ENCODE measurements at regions of chr6 and their contacts with region 1.

Region 1: DNA sequence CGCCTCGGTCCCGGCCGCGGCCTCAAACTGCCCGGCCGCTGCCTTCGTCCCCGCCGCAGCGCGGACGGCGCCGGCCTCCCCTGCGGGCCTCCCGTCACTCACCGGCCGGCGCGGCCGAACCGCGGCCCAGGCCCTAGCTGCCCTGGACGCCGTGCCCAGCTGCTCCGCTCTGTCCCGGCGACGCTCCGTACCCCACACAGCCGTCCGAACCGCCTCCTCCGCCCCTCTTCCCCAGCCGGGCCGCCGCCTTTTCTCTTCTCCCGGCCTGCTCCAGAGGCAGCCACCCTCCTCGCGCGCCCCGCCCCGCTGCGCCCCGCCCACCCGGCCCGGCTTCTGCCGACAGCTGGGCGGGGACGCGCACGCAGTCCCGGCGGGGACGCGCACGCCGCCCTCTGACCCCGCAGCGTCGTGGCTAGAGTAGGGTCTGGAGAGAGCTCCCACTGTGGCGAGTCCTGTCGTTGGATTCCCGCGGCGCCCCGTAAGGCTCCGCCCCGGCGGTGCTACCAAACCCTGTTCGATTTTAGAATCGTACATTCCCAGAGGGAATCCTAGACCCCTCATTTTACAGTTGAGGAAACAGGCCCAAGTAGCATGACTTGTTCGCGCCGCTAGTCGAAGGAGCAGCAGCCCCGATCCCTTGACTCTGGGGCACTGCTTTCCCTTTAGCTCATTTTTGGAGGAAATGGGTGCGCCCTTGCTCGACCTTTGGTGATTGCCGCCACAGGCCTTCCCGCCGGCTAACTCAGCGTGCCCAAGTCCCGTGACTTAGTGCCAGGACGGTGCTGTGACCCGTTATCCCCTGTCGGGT is at the start of gene FBXO30:
- DNase-seq: peak; percentile 94 to 96 (median 95)
- ATAC-seq: peak; percentile 84
- H3K4me3 ChIP-seq: peak within 1 kb of the TSS; percentile 66
- H3K27ac ChIP-seq: peak within 1 kb of the TSS; percentile 95
- H3K4me1 ChIP-seq: peaks cover 14 to 19% of the 10 kb centered on the region in 2 experiments
- H3K27me3 ChIP-seq: no peaks in the 10 kb centered on the region
- CTCF ChIP-seq: no peak
- EP300 ChIP-seq: no peak; the same call in 1 of the 2 replicates
- POLR2A ChIP-seq: peak; percentile 92
- RAD21 ChIP-seq: 0 out of 4 replicates have a peak, but pooled peaks of 1 of the 2 experiments have one; percentile 1
- polyA plus RNA-seq, gene FBXO30: 3.6 to 3.7 TPM

Region 2: GRCh38 chr6:144543006-144543871 is 1271.5 kb before region 1 on chr6:
- CTCF ChIA-PET with region 1: no interaction called
- POLR2A ChIA-PET with region 1: no interaction called
- in situ Hi-C with region 1: no loop called
- intact Hi-C with region 1: loop called (anchors 10 kb)
- DNase-seq: peak in 2 of 4 experiments; percentile 79 to 92
- ATAC-seq: peak; percentile 95
- H3K4me3 ChIP-seq: peak overlapping the region; percentile 9; the same call in 1 of the 2 replicates
- H3K27ac ChIP-seq: peak overlapping the region; percentile 87
- H3K4me1 ChIP-seq: peaks cover 12 to 53% of the 10 kb centered on the region in 2 experiments
- H3K27me3 ChIP-seq: no peaks in the 10 kb centered on the region
- CTCF ChIP-seq: no peak
- EP300 ChIP-seq: peak; percentile 96
- POLR2A ChIP-seq: peak; percentile 59; the same call in 1 of the 2 replicates
- RAD21 ChIP-seq: no peak; a peak in 1 of 4 replicates

Region 3: DNA sequence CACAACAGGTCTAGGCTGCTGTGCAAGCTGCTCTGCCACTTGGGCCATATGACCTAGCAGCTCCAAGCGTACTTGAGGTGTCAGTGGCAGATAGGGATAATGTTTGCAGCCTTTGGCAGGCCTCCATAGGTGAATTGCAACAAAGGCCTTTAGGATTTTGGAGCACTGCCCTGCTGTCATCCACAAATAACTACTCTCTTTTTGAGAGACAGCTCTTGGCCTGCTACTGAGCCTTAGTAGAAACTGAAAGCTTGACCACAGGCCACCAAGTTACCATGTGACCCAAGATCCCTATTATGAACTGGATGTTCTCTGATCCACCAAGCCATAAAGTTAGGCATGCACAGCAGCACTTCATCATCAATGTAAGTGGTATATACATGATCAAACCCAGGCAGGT is 30.0 kb before region 1 on chr6:
- CTCF ChIA-PET with region 1: no interaction called
- POLR2A ChIA-PET with region 1: interaction called, 5 read pairs
- in situ Hi-C with region 1: no loop called
- intact Hi-C with region 1: loop called (anchors 2 kb)
- DNase-seq: peak in 1 of 4 experiments; percentile 28
- ATAC-seq: no peak
- H3K4me3 ChIP-seq: no peak overlapping the region
- H3K27ac ChIP-seq: no peak overlapping the region
- H3K4me1 ChIP-seq: peaks cover 6 to 12% of the 10 kb centered on the region in 2 experiments; a peak in 4 of 5 replicates
- H3K27me3 ChIP-seq: no peaks in the 10 kb centered on the region
- CTCF ChIP-seq: no peak
- EP300 ChIP-seq: no peak
- POLR2A ChIP-seq: no peak
- RAD21 ChIP-seq: no peak

Region 4: GRCh38 chr6:145887969-145888368 is 73.3 kb after region 1 on chr6:
- CTCF ChIA-PET with region 1: no interaction called
- POLR2A ChIA-PET with region 1: interaction called, 4 read pairs
- in situ Hi-C with region 1: no loop called
- intact Hi-C with region 1: loop called (anchors 2 kb)
- DNase-seq: peak in 1 of 4 experiments; percentile 13
- ATAC-seq: peak; percentile 59; the same call in 1 of the 3 replicates
- H3K4me3 ChIP-seq: no peak overlapping the region
- H3K27ac ChIP-seq: no peak overlapping the region
- H3K4me1 ChIP-seq: no peaks in the 10 kb centered on the region
- H3K27me3 ChIP-seq: no peaks in the 10 kb centered on the region
- CTCF ChIP-seq: peak; percentile 24 to 67 (median 64); a peak in 3 of 6 replicates
- EP300 ChIP-seq: no peak
- POLR2A ChIP-seq: no peak
- RAD21 ChIP-seq: peak; percentile 51 to 64

Region 5: DNA sequence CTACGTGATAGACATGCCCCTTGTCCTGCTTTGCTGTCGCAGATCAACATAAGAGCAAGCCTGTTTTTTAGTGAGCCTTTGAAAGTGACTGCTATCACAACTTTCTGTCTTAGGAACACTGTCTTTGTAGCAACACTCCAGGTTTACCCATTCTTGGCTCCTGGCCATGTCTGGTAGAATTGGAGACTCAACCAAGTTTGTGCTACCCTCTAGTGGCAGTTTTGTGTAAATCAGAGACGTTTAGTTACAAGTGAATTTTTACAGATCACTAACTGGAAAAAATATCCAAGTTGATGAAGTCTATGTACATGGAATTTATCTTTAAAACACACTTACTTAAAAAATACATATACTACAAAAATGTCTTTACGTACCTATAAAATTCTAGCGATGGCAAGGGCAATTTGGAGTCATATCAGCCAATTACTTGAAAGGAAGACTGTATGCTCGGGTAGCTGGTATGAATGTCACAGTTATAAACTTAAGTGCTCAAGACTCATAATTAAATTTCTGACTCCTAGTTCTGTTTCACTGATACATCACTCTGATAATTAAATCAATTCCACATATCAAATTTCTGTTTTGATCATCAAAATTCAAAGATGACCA is 885.5 kb after region 1 on chr6:
- CTCF ChIA-PET with region 1: no interaction called
- POLR2A ChIA-PET with region 1: no interaction called
- in situ Hi-C with region 1: no loop called
- intact Hi-C with region 1: loop called (anchors 10 kb)
- DNase-seq: peak; percentile 70 to 90 (median 76)
- ATAC-seq: peak; percentile 91
- H3K4me3 ChIP-seq: no peak overlapping the region
- H3K27ac ChIP-seq: no peak overlapping the region
- H3K4me1 ChIP-seq: no peaks in the 10 kb centered on the region
- H3K27me3 ChIP-seq: no peaks in the 10 kb centered on the region
- CTCF ChIP-seq: peak; percentile 69 to 92 (median 82)
- EP300 ChIP-seq: no peak
- POLR2A ChIP-seq: no peak
- RAD21 ChIP-seq: peak; percentile 98

Measured in K562 (cell line).